Body of pancreas (tissue), 4 donors: ENCODE measurements at regions of chr5 and their contacts with region 1.

Region 1: GRCh38 chr5:134904630-134905245 is at the start of gene PCBD2:
- DNase-seq: peak; percentile 92 to 93 (median 92)
- ATAC-seq: peak; percentile 87
- H3K4me3 ChIP-seq: peak within 1 kb of the TSS; percentile 50 to 83
- H3K27ac ChIP-seq: peak within 1 kb of the TSS; percentile 95 to 99 (median 97)
- H3K4me1 ChIP-seq: peaks cover 6% of the 10 kb centered on the region
- H3K27me3 ChIP-seq: no peaks in the 10 kb centered on the region
- CTCF ChIP-seq: peak; percentile 85 to 98 (median 92)
- POLR2A ChIP-seq: peak; percentile 56 to 70 (median 61)
- total RNA-seq, gene PCBD2: 9.9 to 15.8 TPM

Region 2: DNA sequence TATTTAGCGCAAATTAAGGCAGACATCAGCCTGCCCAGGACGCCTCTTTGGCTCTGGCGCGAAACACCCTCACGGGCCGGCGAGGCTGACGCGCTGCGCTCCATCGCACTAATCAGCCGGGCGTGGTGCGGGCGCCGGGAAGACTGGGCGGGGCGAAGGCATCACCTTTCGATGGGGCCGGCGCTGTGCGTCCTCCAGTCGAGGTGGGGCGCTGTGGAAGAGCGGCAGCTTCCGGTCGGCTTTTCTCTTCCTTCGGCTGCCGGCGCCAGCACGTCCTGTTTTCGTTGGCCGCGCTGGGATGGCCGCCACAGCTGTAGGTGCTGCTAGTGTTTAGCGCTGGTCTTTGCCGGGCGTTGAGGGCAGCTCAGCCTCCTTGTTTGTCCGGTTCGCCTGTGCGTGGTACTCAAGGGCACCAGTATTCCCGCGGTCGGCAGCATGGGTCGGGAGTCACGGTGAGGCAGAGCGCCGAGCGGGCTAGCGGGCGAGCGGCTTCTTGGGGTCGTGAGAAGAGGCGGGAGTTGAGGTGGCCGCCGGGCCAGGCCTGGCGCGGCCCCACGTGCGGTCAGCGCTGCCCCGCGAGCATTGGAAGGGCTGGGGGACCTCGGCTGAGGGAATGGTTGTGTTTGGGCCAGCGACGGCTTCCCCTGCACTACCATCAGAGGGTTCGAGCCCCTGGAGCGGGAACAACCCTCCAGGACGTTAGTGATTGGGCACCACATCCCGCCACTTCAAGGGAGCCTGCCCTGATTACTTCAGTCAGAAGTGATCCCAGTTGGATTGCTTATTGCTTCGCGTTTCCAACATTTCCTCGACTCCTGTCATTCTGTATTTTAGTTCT is 146.0 kb before region 1 on chr5 and contains the start of gene DDX46:
- intact Hi-C with region 1: loop called (anchors 10 kb)
- DNase-seq: peak; percentile 94 to 96 (median 95)
- ATAC-seq: peak; percentile 99
- H3K4me3 ChIP-seq: peak within 1 kb of the TSS; percentile 91 to 92
- H3K27ac ChIP-seq: peak within 1 kb of the TSS; percentile 28 to 82 (median 72)
- H3K4me1 ChIP-seq: peaks cover 29% of the 10 kb centered on the region
- H3K27me3 ChIP-seq: no peaks in the 10 kb centered on the region
- CTCF ChIP-seq: peak; percentile 44 to 96 (median 82)
- POLR2A ChIP-seq: peak; percentile 67 to 90 (median 83)
- total RNA-seq, gene DDX46: 31.9 to 36.3 TPM

Region 3: GRCh38 chr5:135319928-135320607 is 415.3 kb after region 1 on chr5:
- intact Hi-C with region 1: no loop called
- DNase-seq: no peak
- ATAC-seq: no peak
- H3K4me3 ChIP-seq: no peak overlapping the region
- H3K27ac ChIP-seq: no peak overlapping the region
- H3K4me1 ChIP-seq: no peaks in the 10 kb centered on the region
- H3K27me3 ChIP-seq: no peaks in the 10 kb centered on the region
- CTCF ChIP-seq: no peak
- POLR2A ChIP-seq: no peak